Pancreas (tissue), 10 donors: ENCODE measurements at regions of chrX and their contacts with region 1.

Region 1: GRCh38 chrX:11533211-11533651 is 132.5 kb downstream of the ARHGAP6 start:
- DNase-seq: no peak
- ATAC-seq: peak; percentile 95 to 100 (median 99)
- H3K4me3 ChIP-seq: no peak overlapping the region
- H3K27ac ChIP-seq: no peak overlapping the region
- H3K4me1 ChIP-seq: no peaks in the 10 kb centered on the region
- H3K27me3 ChIP-seq: peaks cover 0 to 7% (median 0%) of the 10 kb centered on the region in 4 donors
- CTCF ChIP-seq: peak; percentile 76 to 88 (median 88)

Region 2: GRCh38 chrX:11143931-11144678 is 389.1 kb before region 1 on chrX:
- intact Hi-C with region 1: loop called in 1 of 3 experiments (anchors 10 kb)
- DNase-seq: peak in 4 of 6 donors; percentile 33 to 69 (median 51)
- ATAC-seq: peak; percentile 75 to 97 (median 94)
- H3K4me3 ChIP-seq: no peak overlapping the region
- H3K27ac ChIP-seq: no peak overlapping the region
- H3K4me1 ChIP-seq: no peaks in the 10 kb centered on the region
- H3K27me3 ChIP-seq: peaks cover 0 to 13% (median 0%) of the 10 kb centered on the region in 4 donors
- CTCF ChIP-seq: peak; percentile 55 to 68 (median 60)

Region 3: DNA sequence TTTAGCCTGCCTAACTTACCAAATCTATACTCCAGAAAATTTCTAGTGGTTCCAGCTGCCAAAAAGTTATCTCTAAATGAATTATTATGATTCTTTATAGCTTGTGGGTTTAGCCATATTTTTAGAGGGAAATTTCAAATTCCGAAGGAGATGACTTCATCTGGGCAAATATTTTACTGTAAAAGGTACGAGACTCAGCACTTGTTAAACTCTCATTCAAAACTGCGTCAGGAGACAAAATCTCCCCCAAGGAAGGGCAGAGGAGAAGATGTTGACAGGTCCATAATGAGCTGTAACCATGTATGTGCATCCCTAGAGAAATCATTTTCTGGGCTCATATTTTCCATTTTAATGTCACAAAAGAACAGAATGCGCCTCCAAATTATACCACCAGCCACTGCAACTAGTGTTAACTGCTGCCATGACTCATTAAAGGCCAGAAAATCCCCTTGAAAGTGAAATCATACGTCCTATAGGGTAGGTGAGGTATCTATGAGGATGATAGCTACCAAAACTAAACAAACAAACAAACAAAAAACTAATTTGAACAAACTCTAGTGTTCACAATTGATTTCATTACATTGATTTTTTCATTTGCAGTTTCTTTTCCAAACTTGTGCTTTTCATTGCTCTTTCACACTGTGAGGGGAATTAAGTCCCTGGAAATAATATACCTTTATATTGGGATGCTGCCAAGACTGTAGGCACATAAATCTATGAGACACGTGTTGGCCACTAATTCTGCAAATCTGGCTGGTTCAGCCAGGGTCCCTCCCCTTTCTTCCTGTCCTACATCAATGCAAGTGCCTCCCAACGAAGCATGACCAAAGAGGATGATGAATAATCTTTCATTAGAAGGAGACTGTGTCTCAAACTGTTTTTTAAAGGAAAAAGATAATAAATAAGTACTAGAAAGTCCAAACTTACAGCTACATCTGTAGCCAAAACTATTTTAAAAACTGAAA is 46.7 kb after region 1 on chrX:
- intact Hi-C with region 1: no loop called
- DNase-seq: no peak
- ATAC-seq: no peak
- H3K4me3 ChIP-seq: no peak overlapping the region
- H3K27ac ChIP-seq: no peak overlapping the region
- H3K4me1 ChIP-seq: no peaks in the 10 kb centered on the region
- H3K27me3 ChIP-seq: peaks cover 0 to 14% (median 0%) of the 10 kb centered on the region in 4 donors
- CTCF ChIP-seq: no peak

Region 4: GRCh38 chrX:11724122-11725017 is 191.1 kb after region 1 on chrX:
- intact Hi-C with region 1: loop called in 1 of 3 experiments (anchors 10 kb)
- DNase-seq: peak in 1 of 6 donors; percentile 15
- ATAC-seq: peak in 3 of 4 donors; percentile 65 to 67 (median 65)
- H3K4me3 ChIP-seq: no peak overlapping the region
- H3K27ac ChIP-seq: no peak overlapping the region
- H3K4me1 ChIP-seq: no peaks in the 10 kb centered on the region
- H3K27me3 ChIP-seq: peaks cover 0 to 4% (median 1%) of the 10 kb centered on the region in 4 donors
- CTCF ChIP-seq: peak; percentile 37 to 60 (median 56)

Region 5: GRCh38 chrX:11759461-11760311 is 226.5 kb after region 1 on chrX:
- intact Hi-C with region 1: loop called in 1 of 3 experiments (anchors 10 kb)
- DNase-seq: peak in 5 of 6 donors; percentile 74 to 87 (median 79)
- ATAC-seq: peak; percentile 86 to 95 (median 90)
- H3K4me3 ChIP-seq: peak overlapping the region; percentile 19 to 67 (median 41)
- H3K27ac ChIP-seq: peak overlapping the region in 2 of 4 donors; percentile 81 to 83
- H3K4me1 ChIP-seq: no peaks in the 10 kb centered on the region
- H3K27me3 ChIP-seq: no peaks in the 10 kb centered on the region
- CTCF ChIP-seq: no peak

Region 6: DNA sequence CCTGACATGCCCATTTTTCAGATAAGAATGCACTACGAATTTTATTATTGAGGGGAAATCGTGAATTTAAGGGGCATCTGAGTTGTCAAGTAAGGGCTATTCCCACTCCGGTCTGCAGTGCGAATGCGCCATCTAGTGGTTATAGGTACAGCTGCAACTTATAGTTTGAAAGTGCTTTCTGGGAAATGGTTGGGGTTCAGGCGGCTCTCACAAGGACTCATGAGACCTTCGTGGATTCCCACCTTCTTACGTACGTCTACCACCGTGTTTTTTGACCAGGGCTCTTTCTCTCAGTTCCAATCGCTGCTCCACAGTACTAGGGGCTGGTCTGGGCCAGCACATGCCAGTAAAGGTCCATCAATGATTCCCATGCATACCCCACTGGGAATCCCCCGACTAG is 237.1 kb after region 1 on chrX:
- intact Hi-C with region 1: loop called in 2 of 3 experiments (anchors 5 to 10 kb)
- DNase-seq: peak in 2 of 6 donors; percentile 30 to 31
- ATAC-seq: peak; percentile 75 to 94 (median 88)
- H3K4me3 ChIP-seq: no peak overlapping the region
- H3K27ac ChIP-seq: no peak overlapping the region
- H3K4me1 ChIP-seq: no peaks in the 10 kb centered on the region
- H3K27me3 ChIP-seq: no peaks in the 10 kb centered on the region
- CTCF ChIP-seq: peak; percentile 73 to 89 (median 82)